Dendritic cell treated with granulocyte-macrophage colony-stimulating factor and Interleukin-4, amounts not matched to agents 40 ng/mL and 50 ng/mL, for 4 days (primary cell): ENCODE measurements at regions of chr1 and their contacts with region 1.

Region 1: DNA sequence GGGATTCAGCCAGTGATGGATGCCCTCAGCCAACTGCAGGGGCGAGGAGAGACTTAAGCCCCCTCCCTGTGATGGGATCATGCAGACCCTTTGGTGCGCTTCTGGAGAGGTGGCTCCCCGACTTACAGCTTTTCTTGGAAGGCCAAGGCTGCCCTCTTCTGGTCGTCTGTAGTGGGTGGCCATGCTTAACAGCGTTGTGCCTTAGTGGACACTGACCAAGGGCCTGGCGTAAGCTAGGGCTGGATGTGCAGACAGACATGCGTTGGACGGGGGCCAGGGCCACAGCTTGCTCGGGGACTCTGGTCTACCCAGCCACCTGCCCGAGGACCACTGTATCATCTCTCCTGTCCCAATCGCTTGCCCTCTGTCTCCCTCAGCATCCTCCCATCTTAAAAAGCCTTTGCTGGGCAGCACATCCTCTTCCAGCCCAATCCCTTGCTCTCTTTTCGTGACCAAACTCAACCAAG is 5.5 kb downstream of the AZIN2 start:
- H3K4me3 Mint-ChIP-seq: peak overlapping the region; percentile 37
- H3K27ac Mint-ChIP-seq: no peak overlapping the region
- H3K4me1 Mint-ChIP-seq: peaks cover 40% of the 10 kb centered on the region
- H3K27me3 Mint-ChIP-seq: peaks cover 43% of the 10 kb centered on the region

Region 2: GRCh38 chr1:32876341-32877210 is 209.8 kb before region 1 on chr1:
- intact Hi-C with region 1: loop called (anchors 1 kb)
- H3K4me3 Mint-ChIP-seq: no peak overlapping the region
- H3K27ac Mint-ChIP-seq: no peak overlapping the region
- H3K4me1 Mint-ChIP-seq: peaks cover 28% of the 10 kb centered on the region
- H3K27me3 Mint-ChIP-seq: peaks cover 71% of the 10 kb centered on the region

Region 3: DNA sequence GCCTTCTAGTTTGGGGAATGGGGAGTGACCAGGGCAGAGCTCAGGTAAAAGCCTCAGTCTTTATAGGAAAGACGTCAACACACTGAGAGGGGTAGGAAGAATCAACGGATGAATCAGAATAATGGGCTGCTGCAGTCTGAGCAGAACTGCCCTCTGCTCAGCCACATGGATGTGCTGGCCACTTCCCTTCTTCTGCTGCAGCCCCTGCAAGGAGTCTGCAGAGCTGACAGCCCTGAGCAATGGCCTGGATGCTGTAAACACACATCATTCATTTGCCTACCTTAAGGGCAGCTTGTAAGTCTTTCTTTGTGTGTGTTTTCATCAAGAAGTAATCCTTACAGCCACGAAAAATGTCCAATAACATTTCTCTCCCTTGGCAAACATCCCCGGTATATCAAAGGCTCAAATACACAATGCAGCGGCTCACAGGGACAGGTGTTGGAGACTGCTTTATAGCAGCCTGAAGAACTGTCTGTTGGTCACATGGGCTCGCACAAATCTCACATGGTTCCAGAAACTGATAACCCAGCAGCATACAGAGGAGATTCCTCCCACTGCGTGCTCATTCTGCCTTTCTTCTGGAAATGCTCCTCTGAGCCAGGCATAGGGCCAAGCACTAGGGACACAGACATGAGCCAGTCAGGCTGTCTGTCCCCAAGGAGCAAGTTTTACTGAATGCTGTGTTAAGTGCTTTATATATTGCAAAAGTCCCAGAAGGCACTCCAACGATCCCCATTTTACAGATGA is 887.6 kb after region 1 on chr1:
- intact Hi-C with region 1: no loop called
- H3K4me3 Mint-ChIP-seq: no peak overlapping the region
- H3K27ac Mint-ChIP-seq: no peak overlapping the region
- H3K4me1 Mint-ChIP-seq: no peaks in the 10 kb centered on the region
- H3K27me3 Mint-ChIP-seq: peaks cover 2% of the 10 kb centered on the region